Activated CD4-positive, alpha-beta memory T cell treated with anti-CD3 and anti-CD28 coated beads for 36 hours (primary cell): ENCODE measurements at regions of chr2 and their contacts with region 1.

Region 1: GRCh38 chr2:213151437-213152064 is at the start of gene IKZF2:
- DNase-seq: peak; percentile 67
- H3K4me3 Mint-ChIP-seq: peak within 1 kb of the TSS; percentile 77
- H3K27ac Mint-ChIP-seq: peak within 1 kb of the TSS; percentile 52
- H3K4me1 Mint-ChIP-seq: peaks cover 20% of the 10 kb centered on the region
- H3K27me3 Mint-ChIP-seq: peaks cover 39% of the 10 kb centered on the region
- total RNA-seq, gene IKZF2: 8.1 to 9.1 TPM

Region 2: DNA sequence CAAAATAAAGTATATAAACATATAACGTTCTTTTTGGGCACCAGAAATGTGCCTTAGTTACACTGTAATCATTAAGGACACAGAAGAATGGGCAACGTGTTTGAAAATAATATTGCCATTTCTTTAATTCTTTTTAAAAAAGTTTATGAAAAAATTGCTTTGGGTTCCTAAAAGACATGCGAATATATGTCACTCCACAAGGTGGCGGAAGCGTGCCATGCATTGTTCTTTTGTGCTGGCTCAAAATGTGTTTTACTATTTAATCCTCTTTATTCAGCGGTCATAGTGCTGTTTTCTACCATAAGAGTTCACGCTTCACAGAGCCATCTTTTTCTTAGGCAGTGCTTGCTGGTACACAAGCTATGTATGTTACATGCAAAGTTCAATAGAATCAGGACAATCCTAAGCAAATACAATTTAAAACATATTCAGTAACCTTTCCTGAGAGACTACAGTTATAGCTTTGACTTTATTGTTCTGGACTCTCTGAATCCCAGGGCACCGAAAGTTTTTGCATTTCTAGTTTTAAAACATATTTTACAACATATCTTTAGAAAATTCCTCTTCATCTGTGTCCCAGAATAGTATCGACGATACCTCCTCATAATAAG is 465.2 kb before region 1 on chr2:
- CTCF ChIA-PET with region 1: interaction called, 6 read pairs
- POLR2A ChIA-PET with region 1: interaction called, 4 read pairs
- intact Hi-C with region 1: loop called (anchors 1 kb)
- DNase-seq: peak; percentile 62
- H3K4me3 Mint-ChIP-seq: no peak overlapping the region
- H3K27ac Mint-ChIP-seq: no peak overlapping the region
- H3K4me1 Mint-ChIP-seq: no peaks in the 10 kb centered on the region
- H3K27me3 Mint-ChIP-seq: no peaks in the 10 kb centered on the region

Region 3: DNA sequence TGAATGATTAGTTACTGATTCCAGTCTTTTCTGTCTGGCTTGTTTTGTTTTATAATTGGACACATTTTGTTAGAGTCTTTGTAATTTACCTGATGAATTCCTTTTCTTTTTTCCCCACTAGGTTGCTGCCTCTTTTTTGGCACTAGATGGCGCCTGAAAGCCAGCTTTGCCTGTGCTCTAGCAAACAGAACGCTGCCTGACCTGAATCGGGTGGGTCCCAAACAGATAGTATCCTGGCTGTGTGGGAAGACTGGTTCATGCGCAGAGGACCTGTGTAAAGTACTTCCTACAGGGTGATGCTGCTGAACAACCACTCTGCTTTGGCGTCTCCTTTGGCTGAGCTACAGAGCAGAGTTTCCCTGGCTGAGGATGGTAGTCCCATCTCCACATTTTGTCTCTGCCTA is 288.4 kb before region 1 on chr2:
- CTCF ChIA-PET with region 1: interaction called, 14 read pairs
- POLR2A ChIA-PET with region 1: no interaction called
- intact Hi-C with region 1: loop called (anchors 1 kb)
- DNase-seq: peak; percentile 41
- H3K4me3 Mint-ChIP-seq: no peak overlapping the region
- H3K27ac Mint-ChIP-seq: no peak overlapping the region
- H3K4me1 Mint-ChIP-seq: no peaks in the 10 kb centered on the region
- H3K27me3 Mint-ChIP-seq: no peaks in the 10 kb centered on the region

Region 4: DNA sequence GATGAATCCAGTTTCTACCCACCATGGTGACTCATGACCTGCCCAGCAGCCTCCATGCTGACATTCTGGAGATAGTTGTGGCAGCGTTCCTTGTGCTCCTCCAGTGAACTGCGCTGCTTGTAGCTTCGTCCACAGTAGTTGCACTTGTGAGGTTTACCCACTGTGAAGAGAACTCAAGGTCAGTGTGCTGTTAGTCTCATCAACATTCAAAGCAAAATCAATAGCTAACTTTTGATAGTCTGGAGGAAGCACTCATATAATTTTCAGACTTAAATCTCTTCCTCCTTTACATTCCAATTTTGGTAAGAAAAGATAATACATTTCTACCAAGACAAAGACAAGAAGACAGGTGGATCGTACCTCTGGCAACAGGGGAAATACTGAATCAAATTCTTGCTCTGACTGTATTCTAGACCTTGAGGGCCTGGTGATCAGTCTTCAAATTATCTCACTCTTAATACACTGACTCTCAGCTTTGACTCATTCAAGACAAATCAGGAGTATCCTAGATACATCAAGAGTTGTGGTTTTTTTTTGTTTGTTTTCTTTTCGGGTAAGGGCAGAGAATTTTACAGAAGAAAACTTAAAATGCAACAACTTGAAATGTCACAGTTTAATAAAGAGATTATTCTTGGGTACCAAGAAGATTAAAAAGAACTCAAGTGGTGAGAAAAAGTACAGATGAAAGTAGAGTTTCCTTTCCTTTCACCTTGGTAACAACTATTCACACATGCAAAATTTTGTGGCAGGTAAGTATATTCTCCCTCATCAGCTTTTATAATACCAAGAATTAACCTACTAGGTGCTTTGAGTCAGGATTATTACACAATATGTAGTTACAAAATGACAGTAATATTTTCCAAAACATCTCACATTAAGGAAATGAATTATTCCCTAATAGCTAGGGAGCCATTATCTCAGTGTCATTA is 129.3 kb before region 1 on chr2:
- CTCF ChIA-PET with region 1: no interaction called
- POLR2A ChIA-PET with region 1: no interaction called
- intact Hi-C with region 1: loop called (anchors 1 kb)
- DNase-seq: peak; percentile 24
- H3K4me3 Mint-ChIP-seq: no peak overlapping the region
- H3K27ac Mint-ChIP-seq: peak overlapping the region; percentile 0
- H3K4me1 Mint-ChIP-seq: peaks cover 16% of the 10 kb centered on the region
- H3K27me3 Mint-ChIP-seq: peaks cover 7% of the 10 kb centered on the region

Region 5: GRCh38 chr2:213232649-213233437 is 81.3 kb after region 1 on chr2:
- CTCF ChIA-PET with region 1: no interaction called
- POLR2A ChIA-PET with region 1: no interaction called
- intact Hi-C with region 1: loop called (anchors 5 kb)
- DNase-seq: peak; percentile 33
- H3K4me3 Mint-ChIP-seq: no peak overlapping the region
- H3K27ac Mint-ChIP-seq: peak overlapping the region; percentile 15
- H3K4me1 Mint-ChIP-seq: peaks cover 22% of the 10 kb centered on the region
- H3K27me3 Mint-ChIP-seq: peaks cover 16% of the 10 kb centered on the region